PC-3 (cell line): ENCODE measurements at regions of chr6 and their contacts with region 1.

Region 1: GRCh38 chr6:99746261-99746895 is 139.7 kb downstream of the PRDM13 start:
- DNase-seq: peak; percentile 75
- ATAC-seq: peak; percentile 58
- H3K4me3 ChIP-seq: no peak overlapping the region
- H3K27ac ChIP-seq: no peak overlapping the region
- H3K4me1 ChIP-seq: no peaks in the 10 kb centered on the region
- H3K27me3 ChIP-seq: peaks cover 26% of the 10 kb centered on the region
- CTCF ChIP-seq: peak; percentile 69

Region 2: DNA sequence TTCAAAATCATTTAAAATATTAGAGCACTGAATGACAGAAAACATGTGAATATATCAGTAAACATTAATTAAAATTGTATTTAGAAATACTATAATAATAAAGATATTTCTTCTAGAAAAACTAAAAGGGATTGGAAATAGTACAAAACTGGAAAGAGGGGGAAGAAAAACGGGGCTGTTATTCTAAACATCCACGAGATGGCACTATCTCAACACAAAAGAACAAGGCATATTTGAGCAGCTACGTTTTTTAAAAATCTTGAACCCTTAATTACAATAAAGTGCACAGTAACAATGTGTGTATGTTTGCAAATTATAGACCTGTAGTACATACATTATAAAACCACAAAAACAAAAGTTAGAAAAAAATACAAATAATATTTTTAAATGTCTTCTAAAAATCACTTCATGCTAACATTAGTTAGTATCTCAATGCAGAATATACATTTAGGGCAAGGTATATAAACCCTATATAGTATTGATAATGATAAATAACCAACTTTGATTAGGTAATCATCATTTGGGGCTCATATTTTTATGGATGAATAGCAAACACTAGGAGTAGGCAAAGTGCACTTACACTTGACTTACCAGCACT is 278.8 kb before region 1 on chr6:
- CTCF ChIA-PET with region 1: no interaction called
- POLR2A ChIA-PET with region 1: no interaction called
- intact Hi-C with region 1: loop called (anchors 5 kb)
- DNase-seq: peak; percentile 34
- ATAC-seq: no peak
- H3K4me3 ChIP-seq: no peak overlapping the region
- H3K27ac ChIP-seq: no peak overlapping the region
- H3K4me1 ChIP-seq: no peaks in the 10 kb centered on the region
- H3K27me3 ChIP-seq: no peaks in the 10 kb centered on the region
- CTCF ChIP-seq: peak; percentile 56

Region 3: GRCh38 chr6:99588618-99589289 is 157.6 kb before region 1 on chr6:
- CTCF ChIA-PET with region 1: no interaction called
- POLR2A ChIA-PET with region 1: no interaction called
- intact Hi-C with region 1: loop called (anchors 1 kb)
- DNase-seq: peak; percentile 67
- ATAC-seq: peak; percentile 98
- H3K4me3 ChIP-seq: peak overlapping the region; percentile 85
- H3K27ac ChIP-seq: no peak overlapping the region
- H3K4me1 ChIP-seq: no peaks in the 10 kb centered on the region
- H3K27me3 ChIP-seq: peaks cover 17% of the 10 kb centered on the region
- CTCF ChIP-seq: peak; percentile 63

Region 4: DNA sequence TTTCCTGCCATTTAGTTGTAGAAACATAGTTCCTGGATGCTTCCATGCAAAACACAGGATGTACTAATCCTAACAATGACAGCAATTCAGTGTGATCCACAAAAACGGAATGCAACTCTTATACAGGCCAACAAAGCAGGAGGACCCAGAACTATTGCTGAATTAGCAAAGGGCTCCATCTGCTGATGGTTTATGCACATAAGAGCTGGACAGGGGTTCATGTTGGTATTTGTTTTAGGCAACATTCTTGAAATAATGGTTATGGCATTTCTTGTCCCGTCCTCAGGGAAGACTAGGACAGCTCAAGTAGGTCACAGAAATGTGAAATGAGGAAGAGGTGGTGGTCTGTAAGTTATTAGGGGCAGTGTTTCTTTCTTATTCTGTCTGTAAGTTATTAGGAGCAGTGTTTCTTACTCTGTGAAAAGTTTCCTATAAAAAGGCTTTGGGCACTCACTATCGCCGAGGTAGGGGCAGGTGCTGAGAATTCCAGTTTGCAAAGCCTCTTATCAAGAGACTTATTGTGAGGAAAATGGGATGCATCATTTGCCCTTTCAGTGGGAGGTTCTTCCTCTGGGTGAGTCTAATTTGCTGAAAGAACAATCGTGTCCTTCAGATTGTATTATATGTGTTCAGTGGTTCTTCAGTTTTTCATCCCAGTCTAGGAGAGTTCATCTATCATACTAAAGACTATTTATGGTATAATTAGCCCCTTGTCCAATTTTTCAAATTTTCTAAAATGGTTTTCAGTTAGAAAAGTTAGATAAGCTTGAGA is 76.5 kb after region 1 on chr6:
- CTCF ChIA-PET with region 1: no interaction called
- POLR2A ChIA-PET with region 1: no interaction called
- intact Hi-C with region 1: loop called (anchors 5 kb)
- DNase-seq: peak; percentile 66
- ATAC-seq: peak; percentile 92
- H3K4me3 ChIP-seq: peak overlapping the region; percentile 59
- H3K27ac ChIP-seq: no peak overlapping the region
- H3K4me1 ChIP-seq: no peaks in the 10 kb centered on the region
- H3K27me3 ChIP-seq: no peaks in the 10 kb centered on the region
- CTCF ChIP-seq: peak; percentile 74